ENCODE measurements at regions of chr10 and their contacts with region 1.

Region 1: GRCh38 chr10:100562008-100562711 is 26.4 kb downstream of the HIF1AN start:
- DNase-seq: peak; percentile 90 to 94 (median 93)
- H3K4me3 ChIP-seq: no peak overlapping the region
- H3K27ac ChIP-seq: no peak overlapping the region
- H3K4me1 ChIP-seq: no peaks in the 10 kb centered on the region
- H3K27me3 ChIP-seq: peaks cover 5% of the 10 kb centered on the region
- CTCF ChIP-seq: peak; percentile 99

Region 2: DNA sequence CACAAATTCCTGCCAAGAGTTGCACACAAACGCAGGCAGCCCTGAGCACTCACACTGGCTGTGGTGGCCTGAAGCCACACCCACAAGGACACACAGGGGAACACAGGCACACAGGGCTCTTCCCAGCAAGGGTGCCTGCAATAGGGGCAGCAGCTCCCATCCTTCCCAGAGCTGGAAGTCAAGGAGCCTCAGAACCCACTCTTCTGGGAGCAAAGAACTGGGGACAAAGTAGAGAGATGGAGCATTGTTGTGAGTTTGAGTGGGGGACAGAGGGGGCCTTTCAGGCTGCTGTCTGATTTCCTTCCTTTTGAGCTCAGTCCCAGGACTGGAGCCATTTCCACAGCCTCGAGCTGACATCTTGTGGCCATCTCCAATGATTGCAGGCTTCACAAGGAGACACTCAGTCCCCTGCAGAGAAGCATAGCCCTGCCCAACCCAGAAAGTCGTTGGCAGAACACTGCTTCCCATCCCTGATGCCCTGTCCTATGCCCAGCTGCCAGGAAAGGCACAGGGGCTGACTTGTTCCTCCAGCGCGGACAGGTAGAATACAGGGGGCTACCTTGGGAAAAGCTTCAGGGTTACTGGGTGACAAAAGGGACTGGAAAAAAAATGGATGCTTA is 316.2 kb after region 1 on chr10:
- intact Hi-C with region 1: loop called (anchors 10 kb)
- DNase-seq: peak in 4 of 5 donors; percentile 85 to 93 (median 88)
- H3K4me3 ChIP-seq: no peak overlapping the region
- H3K27ac ChIP-seq: no peak overlapping the region
- H3K4me1 ChIP-seq: peaks cover 0 to 6% (median 3%) of the 10 kb centered on the region in 3 donors
- H3K27me3 ChIP-seq: no peaks in the 10 kb centered on the region
- CTCF ChIP-seq: peak; percentile 85

Measured in kidney (tissue), 22 donors.